ENCODE measurements at regions of chr5 and their contacts with region 1.

Region 1: GRCh38 chr5:68239487-68239886 is 23.9 kb downstream of the PIK3R1 start:
- DNase-seq: peak; percentile 89
- ATAC-seq: peak; percentile 97
- H3K4me3 Mint-ChIP-seq: peak overlapping the region; percentile 21
- H3K27ac Mint-ChIP-seq: peak overlapping the region; percentile 72
- H3K4me1 Mint-ChIP-seq: peaks cover 65% of the 10 kb centered on the region
- H3K27me3 Mint-ChIP-seq: no peaks in the 10 kb centered on the region

Region 2: GRCh38 chr5:68252673-68253623 is 13.5 kb after region 1 on chr5:
- CTCF ChIA-PET with region 1: interaction called, 13 read pairs
- POLR2A ChIA-PET with region 1: no interaction called
- DNase-seq: peak; percentile 54
- ATAC-seq: peak; percentile 40
- H3K4me3 Mint-ChIP-seq: no peak overlapping the region
- H3K27ac Mint-ChIP-seq: no peak overlapping the region
- H3K4me1 Mint-ChIP-seq: peaks cover 76% of the 10 kb centered on the region
- H3K27me3 Mint-ChIP-seq: no peaks in the 10 kb centered on the region

Measured in activated CD8-positive, alpha-beta T cell treated with anti-CD3 and anti-CD28 coated beads, Interleukin-2, amount 10 ng/mL, durations not matched to agents 7 days and 5 days (primary cell).